ENCODE measurements at regions of chr3 and their contacts with region 1.

Region 1: GRCh38 chr3:16264708-16265454 is at the starts of genes DPH3 and OXNAD1:
- DNase-seq: peak; percentile 98 to 100 (median 98)
- ATAC-seq: peak; percentile 98
- H3K4me3 ChIP-seq: peak within 1 kb of the TSS; percentile 79
- H3K27ac ChIP-seq: peak within 1 kb of the TSS; percentile 87
- H3K4me1 ChIP-seq: peaks cover 7 to 10% of the 10 kb centered on the region in 2 experiments; a peak in 4 of 5 replicates
- H3K27me3 ChIP-seq: no peaks in the 10 kb centered on the region
- CTCF ChIP-seq: peak in 1 of 3 experiments; percentile 10; a peak in 1 of 6 replicates
- EP300 ChIP-seq: peak; percentile 53; the same call in 1 of the 2 replicates
- POLR2A ChIP-seq: peak; percentile 96
- RAD21 ChIP-seq: peak in 1 of 2 experiments; percentile 9; a peak in 1 of 4 replicates
- polyA plus RNA-seq, gene DPH3: 131 TPM
- polyA plus RNA-seq, gene OXNAD1: 12.8 to 14.5 TPM

Region 2: GRCh38 chr3:16148783-16149182 is 116.1 kb before region 1 on chr3:
- CTCF ChIA-PET with region 1: no interaction called
- POLR2A ChIA-PET with region 1: no interaction called
- in situ Hi-C with region 1: no loop called
- intact Hi-C with region 1: no loop called
- DNase-seq: no peak
- ATAC-seq: no peak
- H3K4me3 ChIP-seq: no peak overlapping the region
- H3K27ac ChIP-seq: no peak overlapping the region
- H3K4me1 ChIP-seq: no peaks in the 10 kb centered on the region
- H3K27me3 ChIP-seq: peaks cover 0 to 2% of the 10 kb centered on the region in 2 experiments; a peak in 1 of 5 replicates
- CTCF ChIP-seq: no peak
- EP300 ChIP-seq: no peak
- POLR2A ChIP-seq: no peak
- RAD21 ChIP-seq: no peak

Region 3: DNA sequence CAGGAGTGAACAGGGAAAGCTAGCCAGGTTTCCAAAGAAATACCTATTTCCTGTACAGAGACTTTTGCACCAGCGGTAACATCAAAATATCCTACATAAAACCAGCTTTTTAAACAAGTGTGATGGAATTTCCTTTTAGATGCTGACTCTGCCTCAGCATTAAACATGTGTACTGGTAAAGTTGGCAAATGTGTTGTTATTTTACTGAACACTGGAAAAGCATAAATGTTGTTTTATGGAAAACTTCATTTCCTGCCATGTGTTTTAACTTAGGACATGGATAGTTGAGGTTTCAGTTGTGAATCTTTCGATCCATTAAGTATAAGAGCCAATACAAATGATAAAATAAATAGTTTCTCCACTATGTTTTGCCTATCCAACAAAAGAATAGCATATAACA is 15.8 kb after region 1 on chr3:
- CTCF ChIA-PET with region 1: interaction called, 3 read pairs
- POLR2A ChIA-PET with region 1: interaction called, 11 read pairs
- in situ Hi-C with region 1: no loop called
- intact Hi-C with region 1: no loop called
- DNase-seq: no peak
- ATAC-seq: no peak
- H3K4me3 ChIP-seq: no peak overlapping the region
- H3K27ac ChIP-seq: no peak overlapping the region
- H3K4me1 ChIP-seq: 0 out of 5 replicates have a peak, but pooled peaks cover 0 to 4% of the 10 kb centered on the region in 2 experiments
- H3K27me3 ChIP-seq: no peaks in the 10 kb centered on the region
- CTCF ChIP-seq: no peak
- EP300 ChIP-seq: no peak
- POLR2A ChIP-seq: no peak
- RAD21 ChIP-seq: no peak

Region 4: DNA sequence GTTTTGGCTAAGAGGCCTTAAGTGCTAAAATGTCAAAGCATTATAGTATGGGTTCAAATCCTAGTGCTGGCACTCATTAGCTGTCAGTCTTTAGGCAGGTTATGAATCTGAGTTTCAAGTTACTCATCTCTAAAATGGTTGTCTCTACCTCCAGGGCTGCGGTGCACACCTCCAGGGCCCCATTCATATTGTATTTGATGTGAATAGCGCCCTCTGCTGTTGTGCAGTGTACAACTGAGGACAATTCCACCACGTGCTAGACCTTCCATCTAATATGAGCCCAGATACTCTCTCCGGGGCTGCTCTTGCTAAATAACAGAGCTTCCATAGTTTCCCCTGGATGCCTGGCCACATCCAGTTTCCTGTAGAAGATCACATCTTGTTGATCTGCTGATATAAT is 54.4 kb after region 1 on chr3:
- CTCF ChIA-PET with region 1: interaction called, 13 read pairs
- POLR2A ChIA-PET with region 1: interaction called, 3 read pairs
- in situ Hi-C with region 1: no loop called
- intact Hi-C with region 1: loop called (anchors 1 kb)
- DNase-seq: peak; percentile 84 to 87 (median 84)
- ATAC-seq: peak; percentile 97
- H3K4me3 ChIP-seq: no peak overlapping the region
- H3K27ac ChIP-seq: peak overlapping the region; percentile 57; the same call in 2 of the 3 replicates
- H3K4me1 ChIP-seq: peaks cover 0 to 12% of the 10 kb centered on the region in 2 experiments; a peak in 2 of 5 replicates
- H3K27me3 ChIP-seq: no peaks in the 10 kb centered on the region
- CTCF ChIP-seq: peak; percentile 75 to 85 (median 77)
- EP300 ChIP-seq: no peak
- POLR2A ChIP-seq: no peak
- RAD21 ChIP-seq: peak; percentile 83 to 90